AG04450 (cell line): ENCODE measurements at regions of chr1 and their contacts with region 1.

Region 1: DNA sequence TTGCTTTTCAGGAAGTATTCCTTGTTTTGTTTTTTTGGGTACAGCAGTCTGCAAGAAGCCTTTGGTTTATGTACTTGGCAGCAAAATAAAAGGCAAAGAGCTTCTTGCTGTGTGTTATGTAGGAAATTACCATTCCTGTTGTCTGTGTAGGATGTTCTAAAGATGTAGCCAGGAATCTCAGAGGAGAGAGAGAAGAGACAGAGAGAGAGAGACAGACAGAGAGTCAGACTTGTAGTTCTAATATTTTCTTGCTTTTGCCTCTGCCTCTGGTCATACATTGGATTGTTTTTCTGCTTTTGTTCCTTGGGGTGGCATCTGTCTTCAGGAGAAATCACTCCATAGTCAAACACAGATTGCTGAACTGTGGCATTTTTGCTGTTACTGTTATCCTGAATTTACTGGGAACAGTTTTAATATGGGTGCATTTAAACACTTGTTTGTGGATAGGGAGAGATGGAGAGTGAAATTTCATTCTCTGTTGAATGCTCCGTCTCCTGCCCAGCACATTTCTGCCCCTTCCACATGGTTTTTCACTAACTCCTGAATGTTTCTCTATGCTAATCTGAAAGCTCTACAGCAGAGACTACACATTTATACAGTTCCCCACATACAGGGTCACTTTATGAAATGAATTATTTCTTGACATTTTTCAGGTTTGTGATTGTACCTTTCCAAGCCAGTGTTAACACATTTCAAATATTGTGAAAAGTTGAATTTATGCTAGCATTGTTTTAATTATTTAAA is 49.8 kb downstream of the POU2F1 start:
- DNase-seq: no peak
- H3K4me3 ChIP-seq: no peak overlapping the region
- H3K27ac ChIP-seq: no peak overlapping the region
- H3K27me3 ChIP-seq: no peaks in the 10 kb centered on the region
- CTCF ChIP-seq: no peak

Region 2: DNA sequence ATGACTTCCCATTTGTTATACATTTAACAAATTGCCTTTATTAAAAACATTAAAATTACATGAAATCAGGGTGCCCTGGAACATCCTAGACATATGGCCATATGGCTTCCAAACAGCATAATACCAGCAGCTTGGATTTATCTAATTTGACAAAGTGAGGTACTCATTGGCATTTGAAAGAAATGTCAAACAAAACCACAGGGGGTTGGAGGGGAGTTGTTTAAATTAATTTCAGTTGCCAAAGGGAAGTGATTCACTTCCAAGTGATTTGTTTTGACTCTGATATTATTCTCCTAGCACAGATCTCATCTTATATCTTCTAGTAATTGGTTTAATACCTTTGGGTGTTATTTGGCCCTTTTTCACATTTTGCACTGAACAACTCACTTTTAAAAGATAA is 74.4 kb before region 1 on chr1:
- CTCF ChIA-PET with region 1: no interaction called
- POLR2A ChIA-PET with region 1: no interaction called
- DNase-seq: no peak
- H3K4me3 ChIP-seq: no peak overlapping the region
- H3K27ac ChIP-seq: no peak overlapping the region
- H3K27me3 ChIP-seq: peaks cover 6% of the 10 kb centered on the region
- CTCF ChIP-seq: no peak

Region 3: GRCh38 chr1:167258858-167259257 is 11.7 kb before region 1 on chr1:
- CTCF ChIA-PET with region 1: interaction called, 18 read pairs
- POLR2A ChIA-PET with region 1: no interaction called
- DNase-seq: no peak
- H3K4me3 ChIP-seq: no peak overlapping the region
- H3K27ac ChIP-seq: no peak overlapping the region
- H3K27me3 ChIP-seq: no peaks in the 10 kb centered on the region
- CTCF ChIP-seq: no peak

Region 4: GRCh38 chr1:167297222-167298214 is 27.0 kb after region 1 on chr1:
- CTCF ChIA-PET with region 1: interaction called, 12 read pairs
- POLR2A ChIA-PET with region 1: no interaction called
- DNase-seq: no peak
- H3K4me3 ChIP-seq: no peak overlapping the region
- H3K27ac ChIP-seq: peak overlapping the region; percentile 31
- H3K27me3 ChIP-seq: no peaks in the 10 kb centered on the region
- CTCF ChIP-seq: no peak